A673 (cell line): ENCODE measurements at regions of chr2 and their contacts with region 1.

Region 1: GRCh38 chr2:161556440-161556839 is 67.8 kb upstream of the SLC4A10 start:
- DNase-seq: peak; percentile 41
- H3K4me3 ChIP-seq: no peak overlapping the region
- H3K27ac ChIP-seq: no peak overlapping the region
- H3K4me1 ChIP-seq: no peaks in the 10 kb centered on the region
- H3K27me3 ChIP-seq: no peaks in the 10 kb centered on the region
- CTCF ChIP-seq: peak; percentile 48; the same call in 1 of the 2 replicates

Region 2: DNA sequence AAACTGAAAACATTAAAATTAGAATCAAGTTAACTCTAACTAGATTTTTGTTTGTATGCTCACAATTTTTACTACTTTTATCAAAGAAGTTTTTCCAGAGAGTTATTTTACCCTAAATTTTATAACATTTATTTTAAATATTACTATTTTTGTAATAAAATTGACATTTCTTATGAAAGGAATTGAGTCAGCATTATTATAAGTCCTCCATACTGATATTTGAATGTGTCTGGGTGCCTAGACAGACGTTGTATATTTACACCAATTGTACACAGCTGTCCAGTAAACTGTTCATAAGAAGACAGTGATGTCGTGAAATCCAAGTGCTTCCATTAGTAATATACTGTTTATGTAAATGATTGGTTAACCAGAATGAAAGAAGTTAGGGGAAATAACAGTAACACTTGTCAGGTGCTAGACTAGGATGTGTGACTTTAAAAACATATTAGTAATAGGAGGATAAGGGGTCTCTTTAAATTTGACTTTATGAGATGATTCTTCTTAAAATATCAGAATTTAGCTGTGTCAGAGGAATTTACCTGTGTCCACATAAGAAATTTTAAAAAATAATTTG is 322.5 kb before region 1 on chr2:
- CTCF ChIA-PET with region 1: no interaction called
- POLR2A ChIA-PET with region 1: no interaction called
- intact Hi-C with region 1: loop called (anchors 5 kb)
- DNase-seq: no peak
- H3K4me3 ChIP-seq: no peak overlapping the region
- H3K27ac ChIP-seq: no peak overlapping the region
- H3K4me1 ChIP-seq: peaks cover 13% of the 10 kb centered on the region
- H3K27me3 ChIP-seq: no peaks in the 10 kb centered on the region
- CTCF ChIP-seq: no peak

Region 3: GRCh38 chr2:161448431-161448830 is 108.0 kb before region 1 on chr2:
- CTCF ChIA-PET with region 1: no interaction called
- POLR2A ChIA-PET with region 1: no interaction called
- intact Hi-C with region 1: no loop called
- DNase-seq: peak; percentile 18
- H3K4me3 ChIP-seq: no peak overlapping the region
- H3K27ac ChIP-seq: no peak overlapping the region
- H3K4me1 ChIP-seq: no peaks in the 10 kb centered on the region
- H3K27me3 ChIP-seq: no peaks in the 10 kb centered on the region
- CTCF ChIP-seq: no peak

Region 4: DNA sequence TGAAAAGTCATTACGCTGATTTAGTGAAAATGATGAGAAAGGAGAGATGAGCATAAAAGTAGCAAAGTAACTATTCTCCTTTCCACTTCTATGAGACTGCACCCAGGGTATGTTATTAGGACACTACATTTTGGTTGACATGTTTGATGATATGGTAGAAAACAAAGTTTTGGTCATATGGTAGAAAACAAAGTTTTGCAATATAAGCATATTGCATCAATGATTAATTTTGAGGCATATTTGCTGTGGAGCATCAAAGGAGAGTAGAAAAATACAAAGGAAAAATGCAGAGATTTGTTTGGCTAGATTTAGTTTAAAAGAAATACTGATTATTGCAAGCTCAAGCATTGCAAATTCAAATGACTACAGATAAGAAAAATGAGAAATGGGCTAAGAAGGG is 1100.1 kb after region 1 on chr2:
- CTCF ChIA-PET with region 1: no interaction called
- POLR2A ChIA-PET with region 1: no interaction called
- intact Hi-C with region 1: no loop called
- DNase-seq: no peak
- H3K4me3 ChIP-seq: no peak overlapping the region
- H3K27ac ChIP-seq: no peak overlapping the region
- H3K4me1 ChIP-seq: no peaks in the 10 kb centered on the region
- H3K27me3 ChIP-seq: no peaks in the 10 kb centered on the region
- CTCF ChIP-seq: no peak